AG04450 (cell line): ENCODE measurements at regions of chr1 and their contacts with region 1.

Region 1: GRCh38 chr1:242673652-242674051 is 149.2 kb upstream of the PLD5 start:
- DNase-seq: no peak
- H3K4me3 ChIP-seq: no peak overlapping the region
- H3K27ac ChIP-seq: no peak overlapping the region
- H3K27me3 ChIP-seq: no peaks in the 10 kb centered on the region
- CTCF ChIP-seq: no peak

Region 2: GRCh38 chr1:242651817-242652216 is 21.8 kb before region 1 on chr1:
- CTCF ChIA-PET with region 1: interaction called, 10 read pairs
- POLR2A ChIA-PET with region 1: no interaction called
- DNase-seq: no peak
- H3K4me3 ChIP-seq: no peak overlapping the region
- H3K27ac ChIP-seq: no peak overlapping the region
- H3K27me3 ChIP-seq: no peaks in the 10 kb centered on the region
- CTCF ChIP-seq: no peak